Ascending aorta (tissue), 2 donors: ENCODE measurements at regions of chr4 and their contacts with region 1.

Region 1: GRCh38 chr4:183504064-183504929 is 561 bp upstream of the ING2 start:
- DNase-seq: peak; percentile 93 to 100
- H3K4me3 ChIP-seq: peak overlapping the region; percentile 85 to 98
- H3K27ac ChIP-seq: peak overlapping the region; percentile 92 to 95
- H3K4me1 ChIP-seq: peaks cover 4 to 16% of the 10 kb centered on the region in 2 donors
- H3K27me3 ChIP-seq: no peaks in the 10 kb centered on the region
- CTCF ChIP-seq: peak; percentile 7 to 34 (median 8)

Region 2: GRCh38 chr4:183098723-183099536 is 405.4 kb before region 1 on chr4 and contains the start of gene WWC2:
- intact Hi-C with region 1: loop called (anchors 2 kb)
- DNase-seq: peak; percentile 22 to 94
- H3K4me3 ChIP-seq: peak within 1 kb of the TSS; percentile 79 to 98
- H3K27ac ChIP-seq: peak within 1 kb of the TSS; percentile 94 to 98
- H3K4me1 ChIP-seq: peaks cover 0 to 10% of the 10 kb centered on the region in 2 donors
- H3K27me3 ChIP-seq: no peaks in the 10 kb centered on the region
- CTCF ChIP-seq: peak in 1 of 3 experiments; percentile 26
- total RNA-seq, gene WWC2: 3.8 TPM

Region 3: DNA sequence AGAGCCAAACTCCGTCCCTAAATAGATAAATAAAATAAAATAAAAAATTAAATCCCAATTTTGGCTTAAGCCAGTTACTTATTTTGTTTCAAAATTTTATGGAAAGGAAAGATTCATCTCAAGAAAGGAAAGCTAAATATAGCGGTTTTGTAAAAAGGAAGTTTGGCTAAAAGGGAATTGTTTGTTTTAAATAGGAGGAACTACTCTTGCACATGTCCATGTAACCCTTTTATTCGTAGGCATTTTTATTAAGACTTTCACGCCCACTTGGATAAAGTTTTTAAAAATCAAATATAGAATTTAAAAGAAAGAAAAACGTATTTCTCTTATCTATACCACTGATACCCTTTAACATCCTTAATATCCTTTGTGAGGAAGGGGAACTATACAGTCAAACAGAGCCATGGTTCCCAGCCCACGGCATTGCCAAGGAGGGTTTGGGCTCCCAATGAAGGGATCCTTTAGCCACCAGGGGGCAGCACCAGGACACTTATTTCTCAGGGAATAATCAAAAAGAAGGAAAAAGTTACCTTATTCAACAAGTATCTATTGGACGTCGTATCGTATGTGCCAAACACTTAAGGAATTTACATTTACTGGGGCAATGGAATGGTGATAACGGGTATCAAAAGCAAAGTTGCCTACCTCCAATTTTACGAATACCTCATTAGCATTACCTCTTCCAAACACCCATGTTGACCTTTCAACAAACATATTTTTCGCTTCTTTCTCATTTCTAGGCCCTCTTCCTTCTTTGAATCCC is 32.2 kb before region 1 on chr4:
- intact Hi-C with region 1: loop called (anchors 2 kb)
- DNase-seq: peak; percentile 47 to 93
- H3K4me3 ChIP-seq: peak overlapping the region in 1 of 2 donors; percentile 21
- H3K27ac ChIP-seq: no peak overlapping the region
- H3K4me1 ChIP-seq: no peaks in the 10 kb centered on the region
- H3K27me3 ChIP-seq: no peaks in the 10 kb centered on the region
- CTCF ChIP-seq: peak; percentile 59 to 83 (median 81)

Region 4: DNA sequence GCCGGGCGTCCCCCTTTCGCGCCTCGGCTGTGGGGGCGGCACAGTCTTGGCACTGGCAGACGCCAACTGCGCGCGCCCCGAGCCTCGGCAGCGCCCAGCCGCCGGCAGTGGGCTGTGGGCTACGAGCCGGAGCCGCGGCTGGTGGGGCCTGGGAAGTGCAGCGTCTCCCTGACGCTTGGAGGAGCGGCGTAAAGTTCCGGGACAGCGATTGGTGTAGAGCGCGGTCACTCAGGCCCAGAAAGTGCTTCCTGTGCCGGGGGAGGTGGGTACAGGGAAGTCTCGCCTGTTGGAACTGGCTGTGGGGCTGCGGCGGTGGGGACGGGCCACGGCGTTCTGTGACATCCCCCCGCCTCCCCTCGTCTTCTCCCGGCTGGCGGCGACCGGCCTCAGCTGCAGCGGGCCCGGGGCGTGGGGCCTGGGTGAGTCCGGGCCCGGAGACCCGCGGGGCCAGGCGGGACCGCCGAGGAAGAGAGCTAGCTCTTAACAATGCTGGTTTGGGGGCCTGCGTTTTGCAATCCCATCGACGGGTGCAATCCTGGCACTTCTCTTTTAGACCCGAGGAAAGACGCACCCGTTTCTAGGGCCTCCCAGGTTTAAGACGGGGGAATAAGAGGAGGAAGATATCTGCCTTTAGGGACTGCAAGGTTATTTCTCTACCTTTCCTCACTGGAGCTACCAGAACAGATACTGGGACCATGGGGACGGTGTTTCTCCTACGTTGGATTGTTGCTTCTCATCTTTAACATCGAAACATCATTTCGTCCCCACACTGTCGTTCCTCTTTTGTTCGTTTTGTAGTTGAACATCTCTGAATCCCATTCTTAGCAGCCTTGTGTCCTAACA is 155.0 kb after region 1 on chr4 and contains the starts of genes RWDD4 and TRAPPC11:
- intact Hi-C with region 1: loop called (anchors 1 kb)
- DNase-seq: peak; percentile 91 to 98
- H3K4me3 ChIP-seq: peak within 1 kb of the TSS; percentile 71 to 98
- H3K27ac ChIP-seq: peak within 1 kb of the TSS; percentile 89 to 90
- H3K4me1 ChIP-seq: peaks cover 3 to 14% of the 10 kb centered on the region in 2 donors
- H3K27me3 ChIP-seq: no peaks in the 10 kb centered on the region
- CTCF ChIP-seq: peak; percentile 38 to 45 (median 45)
- total RNA-seq, gene RWDD4: 38.6 TPM
- total RNA-seq, gene TRAPPC11: 124 TPM

Region 5: GRCh38 chr4:184474263-184475095 is 970.2 kb after region 1 on chr4 and contains the start of gene IRF2:
- intact Hi-C with region 1: loop called (anchors 2 kb)
- DNase-seq: peak; percentile 87 to 98
- H3K4me3 ChIP-seq: peak within 1 kb of the TSS; percentile 89 to 95
- H3K27ac ChIP-seq: peak within 1 kb of the TSS; percentile 96 to 98
- H3K4me1 ChIP-seq: peaks cover 0 to 18% of the 10 kb centered on the region in 2 donors
- H3K27me3 ChIP-seq: no peaks in the 10 kb centered on the region
- CTCF ChIP-seq: peak in 2 of 3 experiments; percentile 7 to 15
- total RNA-seq, gene IRF2: 39.6 TPM

Region 6: GRCh38 chr4:184825896-184826690 is 1321.8 kb after region 1 on chr4 and contains the start of gene ACSL1:
- intact Hi-C with region 1: loop called (anchors 10 kb)
- DNase-seq: peak; percentile 66 to 93
- H3K4me3 ChIP-seq: peak within 1 kb of the TSS; percentile 80 to 90
- H3K27ac ChIP-seq: peak within 1 kb of the TSS; percentile 76 to 85
- H3K4me1 ChIP-seq: peaks cover 0 to 10% of the 10 kb centered on the region in 2 donors
- H3K27me3 ChIP-seq: no peaks in the 10 kb centered on the region
- CTCF ChIP-seq: peak in 1 of 3 experiments; percentile 26
- total RNA-seq, gene ACSL1: 31.8 TPM